Activated B cell treated with CpG ODN at 0.5 μM for 24 hours (primary cell): ENCODE measurements at regions of chr4 and their contacts with region 1.

Region 1: DNA sequence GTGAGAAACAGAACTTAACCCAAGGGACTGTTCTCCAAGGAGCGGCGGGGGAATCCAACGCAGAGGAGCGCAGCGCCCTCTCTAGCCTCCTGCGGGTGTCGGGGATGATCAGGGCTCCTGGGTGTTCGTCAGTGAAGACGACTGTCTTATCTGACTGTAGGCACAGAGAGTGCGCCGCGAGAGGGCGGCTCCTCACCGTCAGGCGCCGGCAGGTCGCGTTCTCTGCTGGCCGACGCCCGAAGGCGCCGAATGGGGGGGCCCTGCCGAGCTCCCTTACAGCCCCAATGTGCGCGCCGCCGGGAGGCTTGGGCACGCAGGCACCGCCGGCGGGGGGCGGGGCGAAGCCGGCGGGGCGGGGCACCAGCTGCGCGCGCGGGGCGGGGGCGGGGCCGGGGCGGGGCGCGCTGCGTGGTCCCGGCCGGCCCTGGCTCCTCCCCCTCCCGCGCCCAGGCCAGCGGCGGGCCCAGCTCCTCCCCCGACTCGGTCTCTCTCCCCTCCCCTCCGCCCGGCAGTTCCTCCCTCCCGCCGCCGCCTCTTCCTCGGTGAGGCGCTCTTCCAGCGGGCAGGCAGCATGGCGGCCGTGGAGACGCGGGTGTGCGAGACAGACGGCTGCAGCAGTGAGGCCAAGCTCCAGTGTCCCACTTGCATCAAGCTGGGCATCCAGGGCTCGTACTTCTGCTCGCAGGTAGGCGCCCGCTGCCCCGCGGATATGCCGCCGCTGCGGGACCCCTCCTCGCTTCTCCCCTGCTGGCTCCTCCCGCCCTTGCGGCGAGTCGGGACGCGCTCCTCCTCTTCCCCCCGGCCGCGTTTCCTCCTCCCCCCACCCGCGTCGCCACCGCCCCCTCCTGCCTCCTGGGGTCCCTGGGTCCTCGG is at the start of gene METAP1:
- DNase-seq: peak; percentile 92
- ATAC-seq: peak; percentile 87
- H3K4me3 Mint-ChIP-seq: peak within 1 kb of the TSS; percentile 86
- H3K27ac Mint-ChIP-seq: peak within 1 kb of the TSS; percentile 94
- H3K4me1 Mint-ChIP-seq: peaks cover 25% of the 10 kb centered on the region
- H3K27me3 Mint-ChIP-seq: no peaks in the 10 kb centered on the region
- CTCF ChIP-seq: no peak
- total RNA-seq, gene METAP1: 29.9 and 38.6 TPM in 2 replicates

Region 2: DNA sequence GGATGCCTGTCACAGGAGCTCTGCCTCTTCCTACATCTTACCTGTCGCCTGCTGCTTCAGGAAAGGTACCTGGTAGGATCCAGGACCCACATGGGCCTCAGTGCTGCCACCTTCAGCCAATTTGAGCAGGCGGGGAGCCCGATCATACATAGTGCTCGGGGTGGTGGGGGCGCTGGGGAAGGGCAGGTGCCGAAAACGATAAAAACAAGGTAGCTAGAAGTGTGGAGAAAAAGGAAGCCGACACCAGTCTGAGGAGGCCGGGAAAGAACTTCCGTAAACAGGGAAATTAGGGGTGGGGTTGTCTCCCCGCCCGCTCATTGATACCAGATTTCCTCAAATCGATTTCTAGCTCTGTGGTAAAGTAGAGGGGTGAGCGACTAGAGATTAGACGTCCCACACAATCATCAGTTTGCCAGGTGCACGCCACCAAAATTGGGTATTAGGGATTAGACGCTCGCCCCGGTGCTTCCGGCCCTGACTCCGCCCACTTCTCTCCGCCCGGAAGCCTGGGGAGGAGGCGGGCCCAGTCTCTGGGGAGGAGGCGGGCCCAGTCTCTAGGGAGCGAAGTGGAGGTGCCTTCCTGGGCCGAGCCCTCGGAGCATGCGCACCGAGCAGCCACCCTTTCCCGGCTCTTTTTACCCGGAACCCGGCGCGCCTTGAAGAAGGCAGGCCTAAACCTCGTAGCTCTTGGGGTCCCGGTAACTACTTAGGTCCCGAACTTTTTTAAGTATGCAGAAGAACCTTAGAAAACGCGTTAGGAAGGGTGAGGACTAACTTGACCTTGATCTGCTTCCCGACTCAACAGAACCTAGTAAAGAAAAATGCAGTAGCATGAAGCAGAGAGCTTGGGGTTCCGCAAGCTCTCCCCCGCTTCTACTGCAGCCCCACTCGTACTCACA is 852.2 kb before region 1 on chr4 and contains the start of gene STPG2:
- CTCF ChIA-PET with region 1: interaction called, 3 read pairs
- POLR2A ChIA-PET with region 1: interaction called, 10 read pairs
- intact Hi-C with region 1: loop called (anchors 1 kb)
- DNase-seq: peak; percentile 97
- ATAC-seq: peak; percentile 99
- H3K4me3 Mint-ChIP-seq: peak within 1 kb of the TSS; percentile 92
- H3K27ac Mint-ChIP-seq: peak within 1 kb of the TSS; percentile 97
- H3K4me1 Mint-ChIP-seq: peaks cover 25% of the 10 kb centered on the region
- H3K27me3 Mint-ChIP-seq: no peaks in the 10 kb centered on the region
- CTCF ChIP-seq: no peak
- total RNA-seq, gene STPG2: 0.37 and 0.69 TPM in 2 replicates

Region 3: DNA sequence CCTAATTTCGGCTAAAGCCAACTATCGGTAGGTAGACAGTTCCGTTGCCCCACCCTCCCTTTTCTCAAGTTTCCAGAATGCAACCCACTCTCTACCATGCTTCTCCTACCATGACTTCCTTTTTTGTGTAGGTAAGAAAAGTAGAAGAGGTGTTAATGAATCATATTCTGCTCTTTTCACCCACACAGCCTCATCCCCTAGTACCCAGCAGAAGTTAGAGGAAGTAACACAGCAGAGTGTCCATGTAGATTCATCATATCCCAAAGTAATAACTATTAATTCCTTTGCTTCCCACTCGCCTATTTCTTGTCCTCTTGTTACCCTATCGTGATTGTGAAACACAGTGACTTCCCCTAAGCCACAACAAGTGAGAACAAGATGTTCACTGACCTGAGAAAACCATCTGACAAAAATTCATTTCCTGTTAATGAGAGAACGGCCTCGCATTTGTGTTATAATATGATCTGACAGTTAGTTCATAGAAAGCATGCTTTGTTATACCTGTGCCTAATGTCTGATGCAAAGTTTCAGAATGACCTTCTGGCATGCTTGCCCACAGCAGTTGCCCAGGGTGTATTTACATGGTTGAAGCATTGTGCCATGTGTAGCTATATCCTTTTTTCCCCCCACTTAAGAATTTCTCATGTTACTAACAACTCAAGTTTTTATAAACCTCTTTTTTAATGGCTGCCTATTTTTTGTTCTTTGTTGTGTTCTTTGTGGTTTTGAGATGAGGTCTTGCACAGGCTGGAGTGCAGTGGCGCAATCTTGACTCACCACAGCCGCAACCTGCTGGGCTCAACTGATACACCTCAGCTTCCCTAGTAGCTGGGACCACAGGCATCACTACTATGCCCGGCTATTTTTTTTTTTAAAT is 548.7 kb before region 1 on chr4:
- CTCF ChIA-PET with region 1: no interaction called
- POLR2A ChIA-PET with region 1: no interaction called
- intact Hi-C with region 1: loop called (anchors 5 kb)
- DNase-seq: no peak
- ATAC-seq: peak; percentile 67
- H3K4me3 Mint-ChIP-seq: peak overlapping the region; percentile 72
- H3K27ac Mint-ChIP-seq: peak overlapping the region; percentile 87
- H3K4me1 Mint-ChIP-seq: peaks cover 41% of the 10 kb centered on the region
- H3K27me3 Mint-ChIP-seq: no peaks in the 10 kb centered on the region
- CTCF ChIP-seq: no peak

Region 4: GRCh38 chr4:98879515-98879914 is 115.9 kb before region 1 on chr4:
- CTCF ChIA-PET with region 1: no interaction called
- POLR2A ChIA-PET with region 1: no interaction called
- intact Hi-C with region 1: no loop called
- DNase-seq: no peak
- ATAC-seq: no peak
- H3K4me3 Mint-ChIP-seq: no peak overlapping the region
- H3K27ac Mint-ChIP-seq: no peak overlapping the region
- H3K4me1 Mint-ChIP-seq: no peaks in the 10 kb centered on the region
- H3K27me3 Mint-ChIP-seq: no peaks in the 10 kb centered on the region
- CTCF ChIP-seq: no peak

Region 5: DNA sequence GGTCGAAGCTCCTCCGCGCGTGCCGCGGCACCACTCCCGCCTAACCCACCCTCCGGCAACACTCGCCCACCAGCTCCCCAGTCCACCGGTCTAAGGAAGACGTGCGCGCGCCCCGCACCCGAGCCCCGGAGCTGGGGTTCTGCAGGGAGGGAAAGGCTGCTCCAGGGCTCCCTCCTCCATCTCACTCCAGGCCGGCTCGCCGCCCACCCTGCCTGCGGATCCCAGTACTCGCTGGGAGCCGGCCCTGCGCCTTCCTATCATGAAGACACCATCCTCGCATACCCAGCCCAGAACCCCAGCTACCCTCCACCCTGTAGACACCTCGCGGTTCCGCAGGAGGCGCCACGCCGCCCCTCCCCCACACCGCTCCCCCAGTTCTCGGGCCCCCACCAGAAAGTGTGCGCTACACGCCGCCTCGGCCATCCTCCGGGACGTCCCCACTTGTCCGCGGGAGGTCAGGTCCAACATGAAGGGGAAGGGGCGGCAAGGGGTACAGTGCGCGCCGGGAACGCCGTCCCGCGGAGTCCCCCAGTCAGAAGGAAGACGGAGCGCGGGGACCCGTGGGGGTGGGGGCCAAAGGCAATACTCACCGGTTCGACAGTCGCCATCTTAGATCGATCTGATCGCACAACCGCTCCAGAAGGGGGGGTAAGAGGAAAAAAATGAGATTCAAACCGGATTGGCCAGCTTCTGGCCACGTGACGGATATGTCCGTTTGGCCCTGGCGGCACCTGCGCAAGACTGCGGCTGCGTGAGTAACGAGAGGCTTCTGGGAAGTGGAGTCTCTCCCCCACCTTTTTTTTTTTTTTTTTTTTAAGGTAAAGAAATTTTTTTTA is 66.7 kb before region 1 on chr4 and contains the start of gene EIF4E:
- CTCF ChIA-PET with region 1: interaction called, 25 read pairs
- POLR2A ChIA-PET with region 1: interaction called, 102 read pairs
- intact Hi-C with region 1: loop called (anchors 1 kb)
- DNase-seq: peak; percentile 83
- ATAC-seq: peak; percentile 74
- H3K4me3 Mint-ChIP-seq: peak within 1 kb of the TSS; percentile 96
- H3K27ac Mint-ChIP-seq: peak within 1 kb of the TSS; percentile 98
- H3K4me1 Mint-ChIP-seq: peaks cover 59% of the 10 kb centered on the region
- H3K27me3 Mint-ChIP-seq: no peaks in the 10 kb centered on the region
- CTCF ChIP-seq: no peak
- total RNA-seq, gene EIF4E: 87.3 and 90.5 TPM in 2 replicates

Region 6: DNA sequence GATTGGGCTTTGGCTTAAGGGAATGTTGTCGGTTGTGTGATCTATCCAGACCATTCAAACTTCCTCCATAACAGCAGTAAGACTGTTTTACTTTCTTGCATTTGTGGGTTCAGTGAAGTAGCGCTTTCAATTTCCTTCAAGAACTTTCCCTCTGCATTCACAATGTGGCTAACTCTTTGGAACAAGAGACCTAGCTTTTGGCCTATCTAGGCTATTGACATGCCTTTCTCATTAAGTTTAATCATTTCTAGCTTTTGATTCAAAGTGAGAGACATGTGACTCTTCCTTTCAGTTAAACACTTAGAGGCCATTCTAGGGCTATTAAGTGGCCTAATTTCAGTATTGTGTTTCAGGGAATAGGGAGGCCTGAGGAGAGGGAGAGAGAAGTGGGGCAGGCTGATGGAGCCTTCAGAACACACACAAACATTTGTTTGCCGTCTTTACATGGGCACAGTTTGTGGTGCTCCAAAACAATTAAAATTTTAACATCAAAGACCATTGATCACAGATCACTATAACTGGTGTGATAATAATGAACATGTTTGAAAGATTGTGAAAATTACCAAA is 59.1 kb after region 1 on chr4:
- CTCF ChIA-PET with region 1: interaction called, 132 read pairs
- POLR2A ChIA-PET with region 1: interaction called, 13 read pairs
- intact Hi-C with region 1: loop called (anchors 1 kb)
- DNase-seq: no peak
- ATAC-seq: no peak
- H3K4me3 Mint-ChIP-seq: no peak overlapping the region
- H3K27ac Mint-ChIP-seq: no peak overlapping the region
- H3K4me1 Mint-ChIP-seq: peaks cover 9% of the 10 kb centered on the region
- H3K27me3 Mint-ChIP-seq: no peaks in the 10 kb centered on the region
- CTCF ChIP-seq: no peak

Region 7: GRCh38 chr4:99462875-99463464 is 467.6 kb after region 1 on chr4:
- CTCF ChIA-PET with region 1: no interaction called
- POLR2A ChIA-PET with region 1: no interaction called
- intact Hi-C with region 1: loop called (anchors 2 kb)
- DNase-seq: no peak
- ATAC-seq: peak; percentile 64
- H3K4me3 Mint-ChIP-seq: no peak overlapping the region
- H3K27ac Mint-ChIP-seq: no peak overlapping the region
- H3K4me1 Mint-ChIP-seq: no peaks in the 10 kb centered on the region
- H3K27me3 Mint-ChIP-seq: peaks cover 10% of the 10 kb centered on the region
- CTCF ChIP-seq: no peak

Region 8: GRCh38 chr4:99894161-99894997 is 899.0 kb after region 1 on chr4 and contains the start of gene LAMTOR3:
- CTCF ChIA-PET with region 1: interaction called, 3 read pairs
- POLR2A ChIA-PET with region 1: no interaction called
- intact Hi-C with region 1: loop called (anchors 5 kb)
- DNase-seq: peak; percentile 78
- ATAC-seq: peak; percentile 98
- H3K4me3 Mint-ChIP-seq: peak within 1 kb of the TSS; percentile 94
- H3K27ac Mint-ChIP-seq: peak within 1 kb of the TSS; percentile 90
- H3K4me1 Mint-ChIP-seq: peaks cover 26% of the 10 kb centered on the region
- H3K27me3 Mint-ChIP-seq: no peaks in the 10 kb centered on the region
- CTCF ChIP-seq: no peak
- total RNA-seq, gene LAMTOR3: 21.9 and 23.8 TPM in 2 replicates